ENCODE measurements at regions of chr1 and their contacts with region 1.

Region 1: GRCh38 chr1:223845810-223846682 is at the start of gene TP53BP2:
- DNase-seq: peak; percentile 92 to 95
- ATAC-seq: peak; percentile 95
- H3K4me3 ChIP-seq: peak within 1 kb of the TSS; percentile 77 to 84
- H3K27ac ChIP-seq: peak within 1 kb of the TSS; percentile 98 to 99
- H3K4me1 ChIP-seq: no peaks in the 10 kb centered on the region
- H3K27me3 ChIP-seq: no peaks in the 10 kb centered on the region
- total RNA-seq, gene TP53BP2: 60.6 to 83.9 TPM

Region 2: GRCh38 chr1:223811634-223812415 is 34.2 kb before region 1 on chr1:
- intact Hi-C with region 1: loop called in 1 of 2 experiments (anchors 5 kb)
- DNase-seq: no peak
- ATAC-seq: no peak
- H3K4me3 ChIP-seq: no peak overlapping the region
- H3K27ac ChIP-seq: no peak overlapping the region
- H3K4me1 ChIP-seq: peaks cover 0 to 6% of the 10 kb centered on the region in 2 donors
- H3K27me3 ChIP-seq: no peaks in the 10 kb centered on the region

Region 3: GRCh38 chr1:223887747-223888418 is 41.8 kb after region 1 on chr1:
- intact Hi-C with region 1: loop called (anchors 2 to 5 kb)
- DNase-seq: peak; percentile 73 to 83
- ATAC-seq: peak; percentile 68
- H3K4me3 ChIP-seq: no peak overlapping the region
- H3K27ac ChIP-seq: peak overlapping the region; percentile 65 to 74
- H3K4me1 ChIP-seq: no peaks in the 10 kb centered on the region
- H3K27me3 ChIP-seq: no peaks in the 10 kb centered on the region

Region 4: GRCh38 chr1:224149713-224150112 is 303.7 kb after region 1 on chr1:
- intact Hi-C with region 1: no loop called
- DNase-seq: no peak
- ATAC-seq: no peak
- H3K4me3 ChIP-seq: no peak overlapping the region
- H3K27ac ChIP-seq: no peak overlapping the region
- H3K4me1 ChIP-seq: no peaks in the 10 kb centered on the region
- H3K27me3 ChIP-seq: no peaks in the 10 kb centered on the region